T-cell (primary cell): ENCODE measurements at regions of chr9 and their contacts with region 1.

Region 1: GRCh38 chr9:93051680-93052089 is 6.8 kb upstream of the SUSD3 start:
- DNase-seq: no peak
- ATAC-seq: no peak
- H3K4me3 ChIP-seq: no peak overlapping the region
- H3K4me3 Mint-ChIP-seq: no peak overlapping the region
- H3K27ac ChIP-seq: no peak overlapping the region
- H3K27ac Mint-ChIP-seq: peak overlapping the region; percentile 55
- H3K4me1 ChIP-seq: peaks cover 3 to 50% of the 10 kb centered on the region in 2 experiments
- H3K4me1 Mint-ChIP-seq: peaks cover 41 to 54% (median 48%) of the 10 kb centered on the region in 3 donors
- H3K27me3 ChIP-seq: no peaks in the 10 kb centered on the region
- H3K27me3 Mint-ChIP-seq: no peaks in the 10 kb centered on the region

Region 2: DNA sequence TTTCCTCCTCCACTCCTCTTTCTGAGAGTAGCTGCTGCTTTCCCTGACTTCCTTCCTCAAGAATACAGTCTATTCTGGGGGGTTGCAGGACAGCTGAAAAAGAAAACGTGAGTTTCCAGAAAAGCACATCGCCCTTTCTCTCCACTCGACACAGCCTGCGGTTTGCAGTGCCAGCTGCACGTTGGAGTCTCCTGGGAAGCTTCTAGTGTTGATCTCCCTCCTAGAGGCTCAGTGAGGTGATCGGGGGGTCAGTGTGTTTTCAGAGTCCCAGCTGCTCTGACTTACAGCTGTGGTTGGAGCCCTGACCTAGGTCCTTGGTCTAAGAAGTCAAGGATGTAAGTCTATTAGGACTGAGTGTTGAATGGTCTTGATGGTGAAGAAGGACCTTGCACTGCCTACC is 18.2 kb before region 1 on chr9:
- CTCF ChIA-PET with region 1: interaction called, 3 read pairs
- POLR2A ChIA-PET with region 1: interaction called in 1 of 2 experiments, 10 read pairs
- DNase-seq: no peak
- ATAC-seq: no peak
- H3K4me3 ChIP-seq: no peak overlapping the region
- H3K4me3 Mint-ChIP-seq: peak overlapping the region in 1 of 3 donors; percentile 58
- H3K27ac ChIP-seq: peak overlapping the region; percentile 38
- H3K27ac Mint-ChIP-seq: peak overlapping the region; percentile 84 to 92
- H3K4me1 ChIP-seq: peaks cover 30 to 96% of the 10 kb centered on the region in 2 experiments
- H3K4me1 Mint-ChIP-seq: peaks cover 72 to 82% (median 73%) of the 10 kb centered on the region in 3 donors
- H3K27me3 ChIP-seq: no peaks in the 10 kb centered on the region
- H3K27me3 Mint-ChIP-seq: no peaks in the 10 kb centered on the region

Region 3: GRCh38 chr9:93509084-93509483 is 457.4 kb after region 1 on chr9:
- CTCF ChIA-PET with region 1: no interaction called
- POLR2A ChIA-PET with region 1: interaction called in 1 of 2 experiments, 13 read pairs
- DNase-seq: no peak
- ATAC-seq: no peak
- H3K4me3 ChIP-seq: no peak overlapping the region
- H3K4me3 Mint-ChIP-seq: no peak overlapping the region
- H3K27ac ChIP-seq: no peak overlapping the region
- H3K27ac Mint-ChIP-seq: no peak overlapping the region
- H3K4me1 ChIP-seq: peaks cover 2 to 21% of the 10 kb centered on the region in 2 experiments
- H3K4me1 Mint-ChIP-seq: peaks cover 68 to 83% (median 74%) of the 10 kb centered on the region in 3 donors
- H3K27me3 ChIP-seq: no peaks in the 10 kb centered on the region
- H3K27me3 Mint-ChIP-seq: no peaks in the 10 kb centered on the region